Activated B cell treated with CpG ODN at 0.5 μM for 24 hours (primary cell): ENCODE measurements at regions of chr4 and their contacts with region 1.

Region 1: DNA sequence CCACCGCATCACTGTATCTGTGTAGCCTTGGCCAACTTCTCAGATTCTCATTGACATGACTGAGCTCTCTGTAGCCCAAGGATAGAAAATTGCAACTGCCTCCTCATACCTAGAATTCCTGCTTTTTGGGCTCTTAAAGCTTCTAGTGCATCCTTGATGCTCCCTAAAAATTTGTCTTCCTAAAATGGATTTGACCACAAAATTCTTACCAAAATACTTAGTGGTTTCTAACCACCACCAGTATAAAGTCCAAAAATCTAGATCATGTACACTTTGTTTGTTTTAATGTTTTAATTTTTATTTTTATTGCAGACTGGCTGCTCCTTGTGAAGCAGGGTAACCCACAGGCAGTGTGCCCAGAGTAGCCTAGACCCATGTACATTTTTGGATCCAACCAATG is 75.5 kb downstream of the TBC1D9 start:
- DNase-seq: no peak
- ATAC-seq: no peak
- H3K4me3 Mint-ChIP-seq: no peak overlapping the region
- H3K27ac Mint-ChIP-seq: no peak overlapping the region
- H3K4me1 Mint-ChIP-seq: peaks cover 10% of the 10 kb centered on the region
- H3K27me3 Mint-ChIP-seq: no peaks in the 10 kb centered on the region
- CTCF ChIP-seq: no peak

Region 2: DNA sequence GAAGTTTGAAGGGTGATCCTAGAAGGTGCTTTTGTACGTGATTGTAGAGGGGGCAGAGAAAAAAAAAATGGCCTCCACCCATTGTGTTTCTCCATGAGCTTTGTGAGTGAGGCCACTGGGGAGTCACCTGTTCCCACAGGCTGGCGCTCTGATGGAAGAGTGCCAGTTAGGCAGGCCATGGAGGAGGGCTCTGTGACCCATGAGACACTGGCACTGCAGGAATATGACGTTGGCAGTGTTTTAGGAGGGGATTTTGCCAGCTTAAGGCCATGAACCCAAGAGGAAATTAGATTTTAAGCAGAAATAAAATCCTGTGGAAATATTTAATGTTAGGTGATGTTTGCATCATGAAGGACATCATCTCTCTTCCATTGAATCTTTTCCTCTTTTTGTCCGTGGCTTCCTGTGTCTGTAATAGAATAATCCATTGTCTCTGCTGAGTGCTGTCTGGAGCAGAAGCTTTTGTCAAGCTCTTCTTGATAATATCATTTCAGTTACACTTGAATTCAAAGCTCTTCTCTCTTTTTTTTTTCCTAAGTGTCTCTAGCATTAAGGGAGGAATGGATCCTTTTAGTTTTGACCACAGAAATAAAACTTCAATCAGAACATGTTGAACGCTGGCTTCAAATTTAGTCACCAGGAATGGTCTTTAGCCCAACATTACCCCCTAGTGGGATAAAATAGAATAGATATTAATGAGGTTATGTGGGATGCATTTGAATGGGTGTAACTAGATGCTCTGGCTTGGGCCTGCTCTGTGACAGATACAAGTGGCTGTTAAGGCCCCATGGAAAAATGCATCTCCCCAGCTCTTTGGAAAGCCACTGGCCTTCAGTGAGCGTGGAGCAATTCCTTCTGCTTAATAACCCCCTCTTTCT is 70.9 kb before region 1 on chr4:
- CTCF ChIA-PET with region 1: no interaction called
- POLR2A ChIA-PET with region 1: no interaction called
- intact Hi-C with region 1: no loop called
- DNase-seq: no peak
- ATAC-seq: peak; percentile 83
- H3K4me3 Mint-ChIP-seq: no peak overlapping the region
- H3K27ac Mint-ChIP-seq: no peak overlapping the region
- H3K4me1 Mint-ChIP-seq: peaks cover 12% of the 10 kb centered on the region
- H3K27me3 Mint-ChIP-seq: peaks cover 8% of the 10 kb centered on the region
- CTCF ChIP-seq: peak; percentile 49

Region 3: GRCh38 chr4:140697709-140698560 is 17.2 kb after region 1 on chr4:
- CTCF ChIA-PET with region 1: no interaction called
- POLR2A ChIA-PET with region 1: no interaction called
- intact Hi-C with region 1: loop called (anchors 2 kb)
- DNase-seq: no peak
- ATAC-seq: no peak
- H3K4me3 Mint-ChIP-seq: no peak overlapping the region
- H3K27ac Mint-ChIP-seq: peak overlapping the region; percentile 54
- H3K4me1 Mint-ChIP-seq: peaks cover 32% of the 10 kb centered on the region
- H3K27me3 Mint-ChIP-seq: no peaks in the 10 kb centered on the region
- CTCF ChIP-seq: no peak